Lower leg skin (tissue), 4 donors: ENCODE measurements at regions of chr3 and their contacts with region 1.

Region 1: GRCh38 chr3:33433843-33434242 is 6.4 kb downstream of the UBP1 start:
- DNase-seq: no peak
- H3K4me3 ChIP-seq: no peak overlapping the region
- CTCF ChIP-seq: no peak
- POLR2A ChIP-seq: no peak

Region 2: GRCh38 chr3:32117324-32117723 is 1316.5 kb before region 1 on chr3:
- intact Hi-C with region 1: loop called (anchors 5 kb)
- DNase-seq: no peak
- H3K4me3 ChIP-seq: no peak overlapping the region
- CTCF ChIP-seq: no peak
- POLR2A ChIP-seq: no peak